HEK293 (cell line): ENCODE measurements at regions of chr12 and their contacts with region 1.

Region 1: GRCh38 chr12:88993651-88994050 is 358.6 kb downstream of the DUSP6 start:
- H3K4me3 ChIP-seq: no peak overlapping the region
- H3K27ac ChIP-seq: no peak overlapping the region
- H3K4me1 ChIP-seq: no peaks in the 10 kb centered on the region
- CTCF ChIP-seq: no peak

Region 2: DNA sequence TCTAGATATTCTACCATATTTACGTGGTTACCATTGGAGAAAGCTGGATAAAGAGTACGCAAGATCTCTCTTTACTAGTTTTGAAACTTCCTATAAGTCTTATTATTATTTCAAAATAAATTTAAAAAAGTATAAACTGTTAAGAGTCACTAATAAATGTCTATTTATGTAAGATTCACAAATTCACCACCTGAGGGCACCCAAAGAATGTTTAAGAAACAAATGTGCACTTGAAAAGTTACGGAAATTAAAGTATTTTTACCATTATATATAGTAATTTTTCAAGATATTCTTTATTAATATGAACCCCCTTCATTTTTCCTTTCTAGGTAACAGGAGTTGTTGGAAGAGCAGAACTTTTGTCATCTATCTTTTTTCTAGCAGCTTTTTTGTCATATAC is 839.7 kb before region 1 on chr12:
- CTCF ChIA-PET with region 1: interaction called, 12 read pairs
- POLR2A ChIA-PET with region 1: no interaction called
- H3K4me3 ChIP-seq: no peak overlapping the region
- H3K27ac ChIP-seq: no peak overlapping the region
- H3K4me1 ChIP-seq: no peaks in the 10 kb centered on the region
- CTCF ChIP-seq: no peak